ENCODE measurements at regions of chr3 and their contacts with region 1.

Region 1: GRCh38 chr3:72473156-72473555 is 375.1 kb downstream of the SHQ1 start:
- DNase-seq: no peak
- ATAC-seq: no peak
- H3K4me3 ChIP-seq: no peak overlapping the region
- H3K27ac ChIP-seq: no peak overlapping the region
- H3K4me1 ChIP-seq: no peaks in the 10 kb centered on the region
- CTCF ChIP-seq: no peak
- EP300 ChIP-seq: no peak
- POLR2A ChIP-seq: no peak
- RAD21 ChIP-seq: no peak

Region 2: GRCh38 chr3:72082186-72082715 is 390.9 kb before region 1 on chr3:
- CTCF ChIA-PET with region 1: no interaction called
- POLR2A ChIA-PET with region 1: no interaction called
- DNase-seq: no peak
- ATAC-seq: no peak
- H3K4me3 ChIP-seq: no peak overlapping the region
- H3K27ac ChIP-seq: no peak overlapping the region
- H3K4me1 ChIP-seq: no peaks in the 10 kb centered on the region
- CTCF ChIP-seq: no peak
- EP300 ChIP-seq: no peak
- POLR2A ChIP-seq: no peak
- RAD21 ChIP-seq: no peak

Region 3: DNA sequence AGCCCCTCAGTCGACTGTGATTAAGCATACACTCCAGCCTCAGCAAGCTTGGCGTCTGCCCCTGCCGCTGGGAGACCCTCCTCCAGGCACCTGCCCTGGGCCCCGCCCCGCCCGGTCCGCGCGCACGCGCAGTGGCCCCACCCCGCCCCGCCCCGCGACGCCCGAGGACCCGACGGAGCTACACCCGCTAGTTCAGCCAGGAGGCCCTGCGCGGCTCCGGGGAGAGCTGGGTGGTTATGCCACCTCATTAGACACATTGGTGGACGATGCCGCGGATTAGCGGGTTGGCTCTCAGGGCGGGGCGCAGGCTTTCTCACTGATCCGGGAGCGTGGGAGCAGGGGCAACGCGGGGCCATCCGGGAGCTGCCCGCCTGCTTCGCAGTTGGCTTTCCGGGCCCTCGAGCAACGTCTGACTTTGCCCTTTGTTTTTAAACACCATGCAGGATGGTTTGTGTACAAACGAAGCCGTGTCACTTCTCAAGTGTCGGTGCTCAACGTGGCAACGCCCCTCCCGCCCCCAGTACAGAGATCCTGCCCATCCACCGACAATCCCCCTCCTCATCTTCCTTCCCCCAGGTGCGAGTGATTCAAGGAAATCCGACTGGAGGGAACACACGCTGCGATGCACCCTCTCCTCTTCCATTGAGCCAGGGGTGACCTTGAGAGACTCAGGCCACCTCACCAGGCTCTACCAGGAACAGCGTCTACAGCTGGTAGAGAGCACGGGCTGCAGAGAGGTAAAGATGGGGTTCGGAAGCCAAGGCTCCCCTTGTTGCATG is 265.8 kb after region 1 on chr3:
- CTCF ChIA-PET with region 1: no interaction called
- POLR2A ChIA-PET with region 1: interaction called, 10 read pairs
- DNase-seq: peak; percentile 23 to 86
- ATAC-seq: peak; percentile 83 to 92
- H3K4me3 ChIP-seq: peak overlapping the region; percentile 48
- H3K27ac ChIP-seq: peak overlapping the region; percentile 64 to 80
- H3K4me1 ChIP-seq: peaks cover 10% of the 10 kb centered on the region; the same call in 1 of the 3 replicates
- CTCF ChIP-seq: no peak
- EP300 ChIP-seq: no peak
- POLR2A ChIP-seq: peak; percentile 43
- RAD21 ChIP-seq: 0 out of 5 replicates have a peak, but pooled peaks of 1 of the 2 experiments have one; percentile 16

Measured in A549 (cell line).